AG04449 (cell line): ENCODE measurements at regions of chr7 and their contacts with region 1.

Region 1: GRCh38 chr7:158685693-158686092 is 18.9 kb downstream of the NCAPG2 start:
- DNase-seq: no peak
- H3K4me3 ChIP-seq: no peak overlapping the region
- CTCF ChIP-seq: no peak

Region 2: GRCh38 chr7:158695726-158696452 is 10.2 kb after region 1 on chr7:
- CTCF ChIA-PET with region 1: interaction called, 25 read pairs
- POLR2A ChIA-PET with region 1: no interaction called
- DNase-seq: no peak
- H3K4me3 ChIP-seq: no peak overlapping the region
- CTCF ChIP-seq: peak; percentile 73